ENCODE measurements at regions of chr3 and their contacts with region 1.

Region 1: DNA sequence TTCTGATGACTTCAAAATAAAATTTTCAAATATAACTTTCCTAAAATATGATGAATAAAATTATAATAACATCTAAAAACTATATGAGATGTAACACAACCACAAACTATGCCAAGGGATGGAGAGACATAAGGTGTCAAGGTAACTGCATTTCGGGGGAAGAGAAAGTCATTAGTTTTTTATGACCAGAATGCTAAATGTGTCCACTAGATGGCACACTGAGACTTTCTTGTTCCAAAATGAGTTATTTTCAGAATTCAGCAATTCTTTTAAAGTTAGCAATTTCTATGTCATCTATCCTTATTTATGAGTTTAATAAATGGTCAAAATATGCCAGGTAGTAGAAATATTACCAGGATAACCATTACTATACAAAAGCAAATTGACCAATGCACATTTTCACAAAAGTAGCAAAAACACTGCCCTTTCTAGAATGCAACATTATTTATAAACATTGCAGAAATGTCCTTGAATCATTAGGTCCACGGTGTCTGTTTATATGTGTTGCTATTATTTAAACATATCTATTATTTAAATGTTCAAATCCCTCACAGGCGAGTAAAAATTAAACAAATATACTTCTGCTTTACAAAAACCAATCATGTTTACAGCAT is 374.2 kb downstream of the PLCL2 start:
- DNase-seq: peak in 10 of 35 experiments; percentile 0 to 71 (median 6)
- ATAC-seq: no peak
- H3K4me3 ChIP-seq: no peak overlapping the region
- H3K4me3 Mint-ChIP-seq: no peak overlapping the region
- H3K27ac ChIP-seq: no peak overlapping the region
- H3K27ac Mint-ChIP-seq: no peak overlapping the region
- H3K4me1 ChIP-seq: no peaks in the 10 kb centered on the region
- H3K4me1 Mint-ChIP-seq: no peaks in the 10 kb centered on the region
- H3K27me3 ChIP-seq: no peaks in the 10 kb centered on the region
- H3K27me3 Mint-ChIP-seq: no peaks in the 10 kb centered on the region

Region 2: GRCh38 chr3:16328124-16328523 is 930.8 kb before region 1 on chr3:
- CTCF ChIA-PET with region 1: no interaction called
- POLR2A ChIA-PET with region 1: interaction called in 1 of 2 experiments, 14 read pairs
- DNase-seq: no peak
- ATAC-seq: peak in 1 of 4 experiments; percentile 9
- H3K4me3 ChIP-seq: no peak overlapping the region
- H3K4me3 Mint-ChIP-seq: no peak overlapping the region
- H3K27ac ChIP-seq: no peak overlapping the region
- H3K27ac Mint-ChIP-seq: peak overlapping the region in 1 of 2 donors; percentile 58
- H3K4me1 ChIP-seq: peaks cover 0 to 6% of the 10 kb centered on the region in 2 experiments
- H3K4me1 Mint-ChIP-seq: peaks cover 20 to 42% (median 32%) of the 10 kb centered on the region in 3 donors
- H3K27me3 ChIP-seq: no peaks in the 10 kb centered on the region
- H3K27me3 Mint-ChIP-seq: no peaks in the 10 kb centered on the region

Region 3: DNA sequence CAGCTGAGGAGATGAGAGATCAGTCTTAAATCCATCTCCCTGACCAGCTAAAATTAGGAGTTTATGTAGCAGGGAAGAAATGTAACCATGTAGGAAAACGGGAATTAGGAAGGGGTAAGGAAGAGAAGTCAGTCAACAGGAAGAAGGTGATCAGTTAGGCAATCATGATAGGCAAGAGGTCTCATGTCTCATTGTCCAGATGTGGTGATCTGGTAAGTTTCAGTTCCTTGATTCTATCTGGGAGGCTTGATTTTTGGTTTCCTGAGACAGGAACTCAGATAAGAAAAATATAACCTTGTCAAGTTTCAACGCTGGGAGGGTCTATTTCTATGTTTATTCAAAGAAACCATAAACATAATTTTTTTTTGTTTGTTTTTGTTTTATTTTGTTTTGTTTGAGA is 523.8 kb after region 1 on chr3:
- CTCF ChIA-PET with region 1: no interaction called
- POLR2A ChIA-PET with region 1: no interaction called
- DNase-seq: no peak
- ATAC-seq: no peak
- H3K4me3 ChIP-seq: no peak overlapping the region
- H3K4me3 Mint-ChIP-seq: no peak overlapping the region
- H3K27ac ChIP-seq: no peak overlapping the region
- H3K27ac Mint-ChIP-seq: no peak overlapping the region
- H3K4me1 ChIP-seq: no peaks in the 10 kb centered on the region
- H3K4me1 Mint-ChIP-seq: peaks cover 7 to 9% (median 9%) of the 10 kb centered on the region in 3 donors
- H3K27me3 ChIP-seq: no peaks in the 10 kb centered on the region
- H3K27me3 Mint-ChIP-seq: peaks cover 0 to 3% of the 10 kb centered on the region in 2 donors

Measured in T-cell (primary cell).